Activated CD8-positive, alpha-beta T cell treated with anti-CD3 and anti-CD28 coated beads, Interleukin-2, amount 10 ng/mL, durations not matched to agents 7 days and 5 days (primary cell): ENCODE measurements at regions of chr7 and their contacts with region 1.

Region 1: DNA sequence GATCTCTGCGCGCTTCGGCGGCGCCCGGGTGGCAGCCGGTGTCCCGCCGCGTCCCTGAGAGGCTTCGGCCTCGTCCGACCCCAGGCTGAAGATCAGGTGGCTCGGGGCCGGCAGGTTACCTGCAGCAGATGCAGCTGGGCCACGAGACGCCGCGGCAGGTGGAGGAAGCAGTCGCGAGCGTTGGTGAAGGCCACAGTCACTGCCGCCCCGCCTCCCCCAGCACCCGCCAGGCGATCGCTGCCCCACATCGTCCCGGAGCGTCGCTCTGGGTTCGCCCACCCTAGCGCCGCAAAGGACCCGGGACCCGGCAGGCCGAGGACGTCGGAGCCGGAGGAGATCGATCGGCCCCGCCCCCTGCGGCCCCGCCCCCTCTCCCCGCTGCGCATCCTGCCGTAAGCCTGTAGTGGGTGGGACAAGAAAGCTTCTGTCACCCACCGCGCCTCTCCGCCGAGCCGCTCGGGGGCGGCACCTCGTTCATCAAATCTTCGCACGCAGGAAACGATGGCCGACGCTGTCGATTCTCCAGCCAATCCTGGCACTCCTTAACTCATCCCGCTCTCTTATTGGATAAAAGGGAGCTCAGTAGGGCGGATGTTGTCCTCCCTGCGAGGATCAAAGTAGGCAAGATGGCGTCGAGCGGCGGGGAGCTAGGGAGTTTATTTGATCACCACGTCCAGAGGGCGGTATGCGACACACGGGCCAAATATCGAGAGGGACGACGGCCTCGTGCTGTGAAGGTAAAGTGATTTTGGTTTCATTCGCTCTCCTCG is at the starts of genes PEX1 and RBM48:
- DNase-seq: peak; percentile 97
- ATAC-seq: peak; percentile 94
- H3K4me3 Mint-ChIP-seq: peak within 1 kb of the TSS; percentile 93
- H3K27ac Mint-ChIP-seq: peak within 1 kb of the TSS; percentile 99
- H3K4me1 Mint-ChIP-seq: peaks cover 29% of the 10 kb centered on the region
- H3K27me3 Mint-ChIP-seq: no peaks in the 10 kb centered on the region
- total RNA-seq, gene PEX1: 13.6 to 16.8 TPM
- total RNA-seq, gene RBM48: 14.5 to 15.4 TPM

Region 2: DNA sequence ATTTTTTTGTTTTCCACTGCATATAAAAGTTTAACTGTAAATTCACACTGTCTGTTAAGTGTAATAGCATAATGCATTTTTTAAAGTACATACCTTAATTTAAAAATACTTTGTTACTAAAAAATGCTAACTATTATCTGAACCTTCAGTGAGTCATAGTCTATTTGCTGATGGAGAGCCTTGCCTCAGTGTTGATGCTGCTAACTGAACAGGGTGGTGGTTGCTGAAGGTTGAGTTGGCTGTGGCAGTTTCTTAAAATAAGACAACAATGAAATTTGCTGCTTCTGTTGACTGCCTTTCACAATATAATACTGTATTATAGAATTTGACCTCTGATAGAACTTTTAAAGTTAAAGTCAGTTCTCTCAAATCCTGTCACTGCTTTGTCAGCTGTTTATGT is 153.4 kb before region 1 on chr7:
- CTCF ChIA-PET with region 1: no interaction called
- POLR2A ChIA-PET with region 1: no interaction called
- DNase-seq: no peak
- ATAC-seq: no peak
- H3K4me3 Mint-ChIP-seq: no peak overlapping the region
- H3K27ac Mint-ChIP-seq: no peak overlapping the region
- H3K4me1 Mint-ChIP-seq: no peaks in the 10 kb centered on the region
- H3K27me3 Mint-ChIP-seq: no peaks in the 10 kb centered on the region

Region 3: DNA sequence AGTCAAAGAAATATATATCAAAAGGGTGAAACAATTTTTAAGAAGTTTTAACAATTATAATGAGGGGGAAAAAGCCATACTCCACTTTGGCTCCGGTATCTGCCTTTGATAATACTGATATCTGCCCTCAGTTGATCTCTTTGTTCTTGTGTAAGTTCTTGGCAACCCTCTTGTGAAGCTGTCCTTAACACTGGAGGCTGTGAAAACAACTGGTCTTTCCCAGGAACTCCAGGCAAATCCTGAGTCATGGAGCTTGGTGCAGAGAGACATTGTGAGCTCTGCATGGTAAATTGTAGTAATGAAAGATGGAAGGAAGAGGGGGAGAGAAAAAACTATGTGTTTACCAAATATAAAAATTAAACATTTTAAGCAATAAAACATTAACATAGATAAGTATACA is 38.7 kb before region 1 on chr7:
- CTCF ChIA-PET with region 1: no interaction called
- POLR2A ChIA-PET with region 1: no interaction called
- DNase-seq: no peak
- ATAC-seq: no peak
- H3K4me3 Mint-ChIP-seq: no peak overlapping the region
- H3K27ac Mint-ChIP-seq: no peak overlapping the region
- H3K4me1 Mint-ChIP-seq: no peaks in the 10 kb centered on the region
- H3K27me3 Mint-ChIP-seq: no peaks in the 10 kb centered on the region

Region 4: GRCh38 chr7:92584996-92585395 is 56.6 kb after region 1 on chr7:
- CTCF ChIA-PET with region 1: interaction called, 16 read pairs
- POLR2A ChIA-PET with region 1: interaction called, 15 read pairs
- DNase-seq: peak; percentile 32
- ATAC-seq: peak; percentile 26
- H3K4me3 Mint-ChIP-seq: no peak overlapping the region
- H3K27ac Mint-ChIP-seq: peak overlapping the region; percentile 73
- H3K4me1 Mint-ChIP-seq: peaks cover 54% of the 10 kb centered on the region
- H3K27me3 Mint-ChIP-seq: no peaks in the 10 kb centered on the region

Region 5: GRCh38 chr7:92590711-92591310 is 62.4 kb after region 1 on chr7:
- CTCF ChIA-PET with region 1: interaction called, 16 read pairs
- POLR2A ChIA-PET with region 1: interaction called, 15 read pairs
- DNase-seq: no peak
- ATAC-seq: no peak
- H3K4me3 Mint-ChIP-seq: peak overlapping the region; percentile 98
- H3K27ac Mint-ChIP-seq: no peak overlapping the region
- H3K4me1 Mint-ChIP-seq: peaks cover 42% of the 10 kb centered on the region
- H3K27me3 Mint-ChIP-seq: peaks cover 17% of the 10 kb centered on the region